MCF 10A (cell line): ENCODE measurements at regions of chr4 and their contacts with region 1.

Region 1: DNA sequence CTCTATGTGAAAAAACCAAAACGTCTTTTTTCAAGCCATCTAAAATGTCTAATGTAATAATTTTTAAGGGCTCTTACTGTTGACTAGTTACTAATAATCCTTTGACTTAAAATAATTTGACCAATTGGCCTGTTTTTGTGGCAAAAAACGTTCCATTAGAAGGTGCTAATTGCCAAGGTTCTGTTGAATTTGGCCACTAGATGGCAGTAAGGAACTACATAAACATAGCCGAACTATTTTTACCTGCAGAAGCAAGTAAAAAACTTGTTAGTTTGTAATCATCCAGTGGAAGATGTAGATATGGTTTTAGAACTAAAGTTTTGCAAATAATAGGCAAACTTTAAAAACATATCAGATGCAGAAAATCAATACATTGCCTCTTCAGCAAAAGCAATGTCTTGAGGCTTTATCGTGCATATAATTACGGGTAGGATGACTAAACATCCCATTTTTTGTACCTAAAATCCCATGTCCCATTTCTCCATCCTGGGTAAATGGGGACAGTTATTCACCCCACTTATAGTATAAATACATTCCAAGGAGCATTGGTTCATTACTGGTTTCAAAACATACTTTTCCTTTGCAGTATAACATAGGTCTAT is 57.6 kb downstream of the PROM1 start:
- DNase-seq: peak; percentile 65
- H3K4me3 Mint-ChIP-seq: no peak overlapping the region
- H3K27ac Mint-ChIP-seq: no peak overlapping the region
- H3K4me1 Mint-ChIP-seq: peaks cover 6% of the 10 kb centered on the region
- H3K27me3 Mint-ChIP-seq: no peaks in the 10 kb centered on the region
- CTCF ChIP-seq: peak; percentile 72

Region 2: GRCh38 chr4:14916554-14917297 is 1109.5 kb before region 1 on chr4:
- CTCF ChIA-PET with region 1: no interaction called
- POLR2A ChIA-PET with region 1: no interaction called
- intact Hi-C with region 1: no loop called
- DNase-seq: peak; percentile 66
- H3K4me3 Mint-ChIP-seq: no peak overlapping the region
- H3K27ac Mint-ChIP-seq: peak overlapping the region; percentile 1
- H3K4me1 Mint-ChIP-seq: peaks cover 10% of the 10 kb centered on the region
- H3K27me3 Mint-ChIP-seq: no peaks in the 10 kb centered on the region
- CTCF ChIP-seq: no peak

Region 3: DNA sequence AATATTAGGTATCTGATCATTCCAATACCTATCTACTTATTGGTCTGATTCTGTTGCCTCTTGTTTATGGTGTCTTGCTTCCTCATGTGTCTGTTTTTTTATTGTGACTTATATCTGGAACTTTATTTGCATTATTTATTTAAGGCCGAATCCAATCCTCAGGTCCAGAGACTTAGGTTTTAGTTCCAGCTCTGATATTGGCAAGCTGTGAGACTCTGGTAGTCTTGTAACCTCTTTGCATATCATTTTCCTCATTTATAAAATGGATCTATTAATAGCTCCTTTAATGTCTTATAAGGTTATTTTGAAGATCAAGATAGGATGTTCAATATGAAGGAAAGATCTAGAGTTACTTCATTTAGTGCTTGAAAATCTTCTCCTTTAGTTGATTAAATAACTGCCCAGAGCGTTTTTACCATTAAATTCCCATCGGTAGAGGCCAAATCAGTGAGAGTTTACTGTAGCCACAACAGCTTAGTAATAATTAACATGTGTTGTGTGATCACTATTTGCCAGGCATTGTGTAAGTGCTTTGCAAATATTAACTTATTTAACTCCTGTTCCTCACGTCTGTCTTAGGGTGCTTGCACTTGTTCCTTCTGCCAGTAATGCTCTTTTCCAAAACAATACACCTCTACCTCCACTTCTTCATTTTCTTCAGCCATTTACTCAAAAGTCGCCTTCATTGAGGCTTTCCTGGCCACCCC is 474.4 kb before region 1 on chr4:
- CTCF ChIA-PET with region 1: no interaction called
- POLR2A ChIA-PET with region 1: no interaction called
- intact Hi-C with region 1: no loop called
- DNase-seq: no peak
- H3K4me3 Mint-ChIP-seq: no peak overlapping the region
- H3K27ac Mint-ChIP-seq: no peak overlapping the region
- H3K4me1 Mint-ChIP-seq: no peaks in the 10 kb centered on the region
- H3K27me3 Mint-ChIP-seq: no peaks in the 10 kb centered on the region
- CTCF ChIP-seq: no peak

Region 4: GRCh38 chr4:16196478-16197393 is 170.5 kb after region 1 on chr4:
- CTCF ChIA-PET with region 1: interaction called, 29 read pairs
- POLR2A ChIA-PET with region 1: interaction called, 6 read pairs
- intact Hi-C with region 1: loop called (anchors 1 kb)
- DNase-seq: peak; percentile 62
- H3K4me3 Mint-ChIP-seq: peak overlapping the region; percentile 56
- H3K27ac Mint-ChIP-seq: peak overlapping the region; percentile 44
- H3K4me1 Mint-ChIP-seq: no peaks in the 10 kb centered on the region
- H3K27me3 Mint-ChIP-seq: no peaks in the 10 kb centered on the region
- CTCF ChIP-seq: peak; percentile 19

Region 5: DNA sequence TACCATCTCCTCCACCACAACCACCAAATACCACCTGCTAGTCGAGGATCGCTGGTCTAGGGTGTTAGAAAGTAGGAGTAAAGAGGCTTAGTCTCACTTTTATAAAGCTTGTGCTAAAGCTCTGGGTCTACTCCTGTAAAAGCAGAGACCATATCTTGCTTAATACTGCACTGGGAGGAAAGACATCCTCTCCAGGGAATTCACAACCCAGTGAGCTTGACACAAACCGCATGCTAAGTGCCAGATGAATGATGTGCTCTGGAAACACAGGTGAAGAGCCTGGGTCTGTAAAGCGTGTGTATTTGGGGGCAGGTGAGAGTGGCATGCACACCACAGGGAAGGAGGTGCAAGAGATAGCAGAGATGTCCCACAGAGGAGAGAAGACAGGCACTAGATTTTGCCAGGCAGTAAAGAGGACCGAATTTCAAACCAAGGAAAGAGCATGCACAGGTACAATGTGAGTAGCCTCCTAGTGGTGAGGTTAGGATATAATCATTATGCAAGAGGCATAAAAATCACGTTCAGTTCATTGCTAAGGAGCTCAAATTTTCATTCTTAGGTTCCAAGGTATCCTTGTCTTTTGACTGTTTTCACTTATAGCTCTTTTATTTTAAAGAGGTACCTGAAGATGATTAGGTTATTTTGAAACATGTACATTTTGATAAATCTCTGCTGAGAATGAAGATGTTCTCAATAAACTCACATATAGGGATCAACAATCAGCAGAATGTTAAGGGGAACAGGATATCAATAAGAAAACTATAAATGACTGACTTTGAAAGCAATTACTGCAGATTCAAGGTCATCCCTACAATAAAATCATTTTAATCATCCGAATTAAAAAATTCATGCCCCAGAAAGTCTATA is 179.3 kb after region 1 on chr4:
- CTCF ChIA-PET with region 1: interaction called, 29 read pairs
- POLR2A ChIA-PET with region 1: no interaction called
- intact Hi-C with region 1: no loop called
- DNase-seq: peak; percentile 37
- H3K4me3 Mint-ChIP-seq: no peak overlapping the region
- H3K27ac Mint-ChIP-seq: no peak overlapping the region
- H3K4me1 Mint-ChIP-seq: peaks cover 6% of the 10 kb centered on the region
- H3K27me3 Mint-ChIP-seq: no peaks in the 10 kb centered on the region
- CTCF ChIP-seq: peak; percentile 49

Region 6: GRCh38 chr4:16443504-16444088 is 417.3 kb after region 1 on chr4:
- CTCF ChIA-PET with region 1: interaction called, 3 read pairs
- POLR2A ChIA-PET with region 1: no interaction called
- intact Hi-C with region 1: loop called (anchors 1 kb)
- DNase-seq: peak; percentile 65
- H3K4me3 Mint-ChIP-seq: no peak overlapping the region
- H3K27ac Mint-ChIP-seq: no peak overlapping the region
- H3K4me1 Mint-ChIP-seq: no peaks in the 10 kb centered on the region
- H3K27me3 Mint-ChIP-seq: peaks cover 83% of the 10 kb centered on the region
- CTCF ChIP-seq: peak; percentile 63